Spleen (tissue), 13 donors: ENCODE measurements at regions of chr1 and their contacts with region 1.

Region 1: DNA sequence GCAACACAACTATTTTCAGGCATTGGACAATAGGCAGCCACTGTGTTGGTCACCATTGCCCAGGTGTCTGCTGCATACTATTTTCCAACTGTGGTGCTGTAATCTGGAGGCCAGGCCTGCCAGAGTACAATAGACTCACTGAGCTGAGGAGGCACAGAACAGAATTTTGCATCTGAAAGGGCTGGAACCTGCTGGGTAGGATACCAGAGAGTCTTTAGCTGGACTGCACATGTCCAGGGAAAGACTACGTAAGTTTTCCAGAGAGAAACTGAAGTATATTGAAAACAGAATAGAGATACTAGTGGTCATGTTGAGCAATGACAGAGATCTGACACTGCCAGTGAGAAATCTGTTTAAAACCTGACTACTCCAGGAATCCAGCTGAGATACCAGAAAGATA is 200.8 kb downstream of the RASAL2 start:
- DNase-seq: no peak
- H3K4me3 ChIP-seq: no peak overlapping the region
- H3K27ac ChIP-seq: no peak overlapping the region
- H3K4me1 ChIP-seq: peaks cover 0 to 2% (median under 1%) of the 10 kb centered on the region in 6 donors
- H3K27me3 ChIP-seq: no peaks in the 10 kb centered on the region
- CTCF ChIP-seq: no peak
- POLR2A ChIP-seq: no peak

Region 2: GRCh38 chr1:178501705-178502329 is 207.2 kb after region 1 on chr1:
- intact Hi-C with region 1: loop called (anchors 5 kb)
- DNase-seq: peak; percentile 86
- H3K4me3 ChIP-seq: no peak overlapping the region
- H3K27ac ChIP-seq: no peak overlapping the region
- H3K4me1 ChIP-seq: peaks cover 0 to 11% (median 0%) of the 10 kb centered on the region in 6 donors
- H3K27me3 ChIP-seq: no peaks in the 10 kb centered on the region
- CTCF ChIP-seq: peak in 10 of 11 experiments; percentile 30 to 88 (median 76)
- POLR2A ChIP-seq: no peak